Activated T-helper 1 cell treated with anti-CD3 and anti-CD28 coated beads, Interleukin-12 subunit alpha, Interleukin-12 subunit beta, Interleukin-2, Interleukin-4 antibody, amounts not matched to agents 30 ng/mL and 10 ng/mL and 1 ng/mL, durations not matched to agents 14 hours and 24 hours and 36 hours (primary cell): ENCODE measurements at regions of chr2 and their contacts with region 1.

Region 1: DNA sequence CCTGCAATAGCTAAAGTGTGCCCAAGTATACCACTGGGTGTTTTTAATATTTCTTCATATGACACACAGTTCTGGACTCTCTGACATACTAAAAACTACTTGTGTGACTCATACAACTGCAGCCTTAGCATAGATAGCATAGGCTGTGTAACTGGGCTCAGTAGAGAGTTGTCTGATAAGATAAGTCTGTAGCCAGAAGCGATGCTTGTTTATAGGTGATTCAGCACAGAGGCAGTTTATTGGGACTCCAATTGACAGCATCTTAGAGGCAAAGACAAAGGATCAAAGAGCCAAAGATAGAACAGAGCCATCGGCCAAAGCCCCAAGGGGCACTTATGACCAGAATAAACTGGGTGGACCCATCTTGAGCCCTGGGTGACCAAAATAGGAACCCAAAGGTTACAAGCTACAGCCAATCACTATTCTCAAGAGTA is 42.3 kb downstream of the AAK1 start:
- DNase-seq: no peak
- H3K4me3 Mint-ChIP-seq: no peak overlapping the region
- H3K27ac Mint-ChIP-seq: peak overlapping the region; percentile 42
- H3K4me1 Mint-ChIP-seq: peaks cover 76% of the 10 kb centered on the region
- H3K27me3 Mint-ChIP-seq: no peaks in the 10 kb centered on the region

Region 2: GRCh38 chr2:69585855-69586555 is 15.2 kb before region 1 on chr2:
- intact Hi-C with region 1: loop called (anchors 1 kb)
- DNase-seq: no peak
- H3K4me3 Mint-ChIP-seq: no peak overlapping the region
- H3K27ac Mint-ChIP-seq: peak overlapping the region; percentile 59
- H3K4me1 Mint-ChIP-seq: peaks cover 72% of the 10 kb centered on the region
- H3K27me3 Mint-ChIP-seq: no peaks in the 10 kb centered on the region

Region 3: DNA sequence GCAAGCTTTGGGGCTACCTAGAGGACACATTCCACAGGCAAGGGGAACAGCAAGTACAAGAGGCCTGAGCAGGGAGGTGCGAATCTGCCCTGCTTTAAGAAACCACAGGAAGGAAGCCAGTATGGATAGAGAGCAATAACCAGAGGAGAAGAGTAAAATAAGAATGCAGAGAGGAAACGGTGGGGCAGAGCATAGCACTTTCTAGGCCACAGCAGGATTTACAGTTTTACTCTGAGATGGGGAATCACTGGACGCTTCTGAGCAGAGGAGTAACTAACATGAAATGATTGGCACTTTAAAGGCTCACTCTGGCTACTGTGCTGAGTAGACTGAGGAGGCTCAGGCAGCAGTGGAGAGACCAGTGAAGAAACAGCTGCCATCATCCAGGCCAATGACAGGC is 18.5 kb after region 1 on chr2:
- intact Hi-C with region 1: loop called (anchors 1 kb)
- DNase-seq: peak; percentile 23
- H3K4me3 Mint-ChIP-seq: no peak overlapping the region
- H3K27ac Mint-ChIP-seq: no peak overlapping the region
- H3K4me1 Mint-ChIP-seq: peaks cover 35% of the 10 kb centered on the region
- H3K27me3 Mint-ChIP-seq: no peaks in the 10 kb centered on the region

Region 4: GRCh38 chr2:69694894-69695849 is 94.0 kb after region 1 on chr2:
- intact Hi-C with region 1: no loop called
- DNase-seq: no peak
- H3K4me3 Mint-ChIP-seq: peak overlapping the region; percentile 2
- H3K27ac Mint-ChIP-seq: peak overlapping the region; percentile 63
- H3K4me1 Mint-ChIP-seq: peaks cover 80% of the 10 kb centered on the region
- H3K27me3 Mint-ChIP-seq: no peaks in the 10 kb centered on the region